Posterior cingulate gyrus (tissue), 11 donors: ENCODE measurements at regions of chr1 and their contacts with region 1.

Region 1: GRCh38 chr1:241611063-241611462 is 29.1 kb downstream of the CHML start:
- DNase-seq: no peak

Region 2: GRCh38 chr1:241641748-241642592 is 30.9 kb after region 1 on chr1:
- intact Hi-C with region 1: no loop called
- DNase-seq: no peak

Region 3: DNA sequence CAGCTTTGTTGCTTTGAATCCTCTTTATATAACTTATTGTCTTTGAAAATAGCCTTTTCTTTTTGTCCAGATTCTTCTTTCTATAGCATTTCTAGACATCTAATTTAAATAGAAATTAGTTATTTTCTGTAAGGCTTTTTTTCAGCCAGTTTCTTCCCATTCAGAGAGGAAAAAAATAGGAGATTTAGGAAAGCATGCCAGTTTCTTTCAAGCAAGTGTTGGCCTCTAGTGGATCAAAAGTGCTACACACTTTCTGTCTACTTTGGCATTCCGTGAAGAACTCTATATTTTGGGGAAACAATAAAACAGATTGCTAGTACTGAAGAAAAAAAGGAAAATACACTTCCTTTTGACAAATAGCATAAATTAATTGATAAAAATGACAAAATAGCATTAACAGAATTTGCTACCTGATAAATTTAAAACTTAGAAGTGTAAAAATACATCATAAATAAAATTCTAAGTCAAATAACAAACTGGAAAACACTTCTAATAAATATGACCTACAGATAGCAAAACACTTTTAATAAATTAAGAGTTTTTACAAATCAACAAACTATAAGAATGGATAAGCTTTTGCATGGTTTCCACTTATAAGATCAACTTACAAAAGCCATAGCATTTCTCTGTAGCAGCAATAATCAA is 223.8 kb after region 1 on chr1:
- intact Hi-C with region 1: loop called (anchors 2 kb)
- DNase-seq: no peak

Region 4: DNA sequence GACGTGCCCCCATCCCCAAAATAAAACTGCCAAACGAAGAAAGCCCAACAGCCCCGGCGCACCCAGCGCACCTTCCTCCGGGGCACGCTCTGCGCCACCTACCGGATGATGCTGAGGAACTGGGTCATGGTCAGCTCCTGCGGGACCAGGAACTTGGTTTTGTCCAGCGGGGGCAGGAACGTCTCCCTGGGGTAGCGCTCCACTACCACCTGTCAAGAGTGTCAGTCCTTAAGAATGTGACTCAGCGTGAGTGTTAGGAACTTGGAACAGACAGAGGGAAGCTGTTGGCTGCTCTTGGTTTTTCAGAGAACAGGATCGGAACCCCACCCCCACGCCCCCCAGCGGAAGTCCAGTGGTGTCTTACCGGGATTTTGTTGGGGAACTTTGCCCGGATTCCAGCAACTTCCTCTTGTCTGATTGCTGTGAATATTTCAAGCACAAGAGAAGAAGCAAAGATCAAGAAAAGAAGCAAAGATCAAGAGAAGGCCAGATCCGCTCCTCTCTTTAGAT is 387.4 kb after region 1 on chr1:
- intact Hi-C with region 1: loop called (anchors 10 kb)
- DNase-seq: peak in 9 of 10 donors; percentile 31 to 86 (median 52)